Activated T-helper 2 cell treated with anti-CD3 and anti-CD28 coated beads, Interferon-gamma antibody, Interleukin-2, Interleukin-4, amounts not matched to agents 10 μg/mL and 5 μg/mL and 100 μg/mL, durations not matched to agents 14 hours and 24 hours and 36 hours (primary cell): ENCODE measurements at regions of chr13 and their contacts with region 1.

Region 1: DNA sequence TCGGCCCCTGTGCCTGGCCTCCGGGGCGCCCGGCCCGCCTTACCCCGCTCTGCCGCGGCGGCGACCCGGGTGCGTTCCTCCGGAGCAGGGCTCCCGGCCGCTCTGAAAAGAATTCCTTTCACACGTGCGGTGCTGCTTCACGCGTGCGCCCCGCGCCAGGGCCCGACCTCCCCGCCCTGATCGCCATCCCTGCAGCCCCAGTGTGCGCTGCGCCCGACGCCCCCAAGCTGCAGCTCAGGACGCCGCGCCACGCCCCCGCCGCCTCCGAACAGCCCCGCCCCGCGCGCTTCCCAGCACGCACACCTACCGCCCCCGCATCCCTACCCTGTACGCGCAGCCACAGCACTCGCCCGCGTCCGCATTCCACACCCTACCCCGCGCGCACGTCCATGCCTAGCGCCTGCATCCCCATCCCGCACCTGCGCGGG is at the start of gene GJA3:
- DNase-seq: peak; percentile 40
- H3K4me3 Mint-ChIP-seq: peak within 1 kb of the TSS; percentile 84
- H3K27ac Mint-ChIP-seq: peak within 1 kb of the TSS; percentile 28
- H3K4me1 Mint-ChIP-seq: peaks cover 13% of the 10 kb centered on the region
- H3K27me3 Mint-ChIP-seq: peaks cover 59% of the 10 kb centered on the region
- total RNA-seq, gene GJA3: 0.05 and 0.07 TPM in 2 replicates

Region 2: GRCh38 chr13:19713186-19713965 is 447.5 kb before region 1 on chr13:
- intact Hi-C with region 1: no loop called
- DNase-seq: no peak
- H3K4me3 Mint-ChIP-seq: no peak overlapping the region
- H3K27ac Mint-ChIP-seq: peak overlapping the region; percentile 40
- H3K4me1 Mint-ChIP-seq: peaks cover 24% of the 10 kb centered on the region
- H3K27me3 Mint-ChIP-seq: no peaks in the 10 kb centered on the region

Region 3: DNA sequence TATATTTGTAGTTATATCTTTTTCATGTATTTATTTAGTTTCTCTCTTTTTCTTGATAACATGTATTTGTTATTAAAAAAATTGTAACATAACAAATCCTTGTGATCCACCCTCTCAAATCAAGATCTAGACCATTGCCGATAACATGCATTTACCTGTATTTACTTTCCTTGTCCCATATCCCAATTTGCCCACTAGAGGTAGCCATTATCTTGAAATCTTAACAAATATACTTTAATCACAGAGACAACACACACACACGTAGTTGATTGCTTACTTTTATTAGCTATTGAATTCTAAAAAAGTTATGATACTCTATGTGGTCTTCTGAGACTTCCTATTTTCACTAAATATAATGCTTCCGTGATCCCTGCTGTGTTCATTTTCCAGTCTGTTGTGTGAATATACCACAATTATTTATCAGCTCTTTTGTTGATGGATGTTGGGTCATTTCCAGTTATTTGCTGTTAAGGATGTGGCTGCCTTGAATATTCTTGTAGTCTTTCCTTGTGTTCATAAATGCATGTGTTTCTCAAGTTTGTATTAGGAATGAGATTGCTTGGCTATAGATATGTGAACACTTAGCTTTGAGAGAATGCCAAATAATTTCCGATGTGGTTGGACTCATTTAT is 233.6 kb before region 1 on chr13:
- intact Hi-C with region 1: loop called (anchors 5 kb)
- DNase-seq: no peak
- H3K4me3 Mint-ChIP-seq: no peak overlapping the region
- H3K27ac Mint-ChIP-seq: no peak overlapping the region
- H3K4me1 Mint-ChIP-seq: peaks cover 1% of the 10 kb centered on the region
- H3K27me3 Mint-ChIP-seq: peaks cover 1% of the 10 kb centered on the region

Region 4: DNA sequence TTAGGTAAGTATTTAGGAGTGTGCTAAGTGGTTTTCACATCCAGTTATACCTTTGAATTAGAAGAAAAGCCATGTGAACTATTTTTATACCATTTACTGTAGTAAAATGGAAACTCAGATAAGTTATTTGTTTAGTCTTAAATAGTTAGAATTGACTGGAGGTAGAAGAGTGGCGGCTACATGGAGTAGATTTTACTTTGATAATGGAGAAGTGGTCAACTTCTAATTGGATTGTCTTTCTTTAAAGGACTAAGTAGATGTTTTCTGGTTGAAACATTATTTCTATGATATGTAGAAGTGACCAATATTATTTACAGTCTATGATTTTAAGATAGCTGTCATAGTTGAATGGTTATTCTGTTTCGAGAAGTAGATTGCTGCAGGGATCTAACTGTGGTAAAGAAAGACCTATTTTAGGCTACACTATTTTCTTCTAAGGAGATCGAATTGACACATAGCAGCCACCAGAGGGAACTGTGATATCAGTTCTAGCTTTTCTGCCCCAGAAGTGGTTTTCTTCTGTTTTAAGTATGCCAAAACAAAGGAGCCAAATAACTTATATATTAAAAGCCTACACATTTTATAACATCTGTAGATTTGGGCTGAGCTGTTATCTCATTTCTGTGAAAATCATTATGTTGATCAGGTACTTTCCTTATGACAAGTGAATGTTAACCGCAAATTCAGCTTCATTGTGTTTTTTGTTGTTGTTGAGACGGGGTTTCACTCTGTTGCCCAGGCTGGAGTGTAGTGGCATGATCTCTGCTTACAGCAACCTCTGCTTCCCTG is 176.2 kb before region 1 on chr13:
- intact Hi-C with region 1: loop called (anchors 1 kb)
- DNase-seq: no peak
- H3K4me3 Mint-ChIP-seq: no peak overlapping the region
- H3K27ac Mint-ChIP-seq: no peak overlapping the region
- H3K4me1 Mint-ChIP-seq: peaks cover 26% of the 10 kb centered on the region
- H3K27me3 Mint-ChIP-seq: no peaks in the 10 kb centered on the region

Region 5: DNA sequence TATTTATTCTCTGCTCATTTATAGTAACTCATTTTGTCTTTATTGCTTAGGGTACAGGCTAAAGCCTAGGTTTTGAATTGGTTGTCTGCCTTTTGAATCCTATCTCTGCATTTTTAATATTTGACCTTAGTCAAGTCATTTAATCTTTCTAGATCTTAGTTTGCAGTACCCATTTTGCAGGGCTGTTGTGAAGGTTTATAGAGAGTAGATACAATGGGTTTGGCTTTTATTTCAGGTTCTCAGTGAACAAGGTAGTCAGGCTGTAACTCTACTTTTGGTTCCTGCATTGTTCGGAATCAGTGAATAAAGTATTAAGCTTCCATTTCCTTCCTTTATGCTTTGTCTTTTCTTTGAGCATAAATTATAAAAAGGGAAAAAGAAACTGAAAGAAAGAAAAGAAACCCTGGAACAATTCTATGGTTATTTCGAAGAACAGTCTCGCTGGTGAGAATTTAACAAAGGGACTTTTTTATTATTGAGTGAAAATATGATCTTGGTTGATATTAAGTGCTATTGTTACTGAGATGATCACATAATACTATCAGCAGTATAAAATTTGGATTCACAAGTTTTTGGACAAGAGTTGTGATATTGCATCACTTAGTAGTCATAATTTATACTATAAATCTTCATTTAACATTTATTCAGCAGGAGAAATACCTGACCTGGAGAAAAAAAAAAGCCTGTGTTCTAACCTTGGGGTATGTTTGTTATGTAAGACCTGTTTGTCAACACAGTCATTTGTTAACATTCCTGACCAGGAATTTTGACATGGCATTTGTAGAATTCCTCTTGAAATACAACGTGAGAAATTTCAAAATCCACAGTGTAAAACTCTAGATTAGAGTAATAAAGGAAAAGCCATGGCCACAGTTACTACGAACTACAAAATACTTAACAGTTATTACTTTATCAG is 111.0 kb before region 1 on chr13:
- intact Hi-C with region 1: no loop called
- DNase-seq: no peak
- H3K4me3 Mint-ChIP-seq: peak overlapping the region; percentile 32
- H3K27ac Mint-ChIP-seq: peak overlapping the region; percentile 34
- H3K4me1 Mint-ChIP-seq: peaks cover 16% of the 10 kb centered on the region
- H3K27me3 Mint-ChIP-seq: no peaks in the 10 kb centered on the region

Region 6: GRCh38 chr13:20127577-20128466 is 33.0 kb before region 1 on chr13:
- intact Hi-C with region 1: loop called (anchors 1 kb)
- DNase-seq: peak; percentile 33
- H3K4me3 Mint-ChIP-seq: peak overlapping the region; percentile 54
- H3K27ac Mint-ChIP-seq: no peak overlapping the region
- H3K4me1 Mint-ChIP-seq: peaks cover 2% of the 10 kb centered on the region
- H3K27me3 Mint-ChIP-seq: peaks cover 28% of the 10 kb centered on the region